ENCODE measurements at regions of chr1 and their contacts with region 1.

Region 1: GRCh38 chr1:100132566-100133477 is at the starts of genes SASS6 and TRMT13:
- DNase-seq: peak; percentile 88 to 97
- ATAC-seq: peak; percentile 96 to 99 (median 97)
- H3K4me3 ChIP-seq: peak within 1 kb of the TSS; percentile 85
- H3K4me3 Mint-ChIP-seq: peak within 1 kb of the TSS; percentile 97
- H3K27ac ChIP-seq: peak within 1 kb of the TSS; percentile 62
- H3K27ac Mint-ChIP-seq: peak within 1 kb of the TSS; percentile 92 to 93
- H3K4me1 ChIP-seq: peaks cover 10% of the 10 kb centered on the region
- H3K4me1 Mint-ChIP-seq: peaks cover 21 to 32% of the 10 kb centered on the region in 2 donors
- H3K27me3 ChIP-seq: no peaks in the 10 kb centered on the region
- H3K27me3 Mint-ChIP-seq: no peaks in the 10 kb centered on the region
- CTCF ChIP-seq: no peak
- total RNA-seq, gene SASS6: 5.3 to 6.2 (median 5.6) TPM
- total RNA-seq, gene TRMT13: 12.7 to 22.3 (median 13.4) TPM

Region 2: GRCh38 chr1:99849744-99850458 is 282.9 kb before region 1 on chr1 and contains the start of gene AGL:
- intact Hi-C with region 1: loop called (anchors 5 kb)
- DNase-seq: peak; percentile 83 to 92
- ATAC-seq: peak; percentile 94 to 96 (median 95)
- H3K4me3 ChIP-seq: peak within 1 kb of the TSS; percentile 59
- H3K4me3 Mint-ChIP-seq: peak within 1 kb of the TSS; percentile 97
- H3K27ac ChIP-seq: peak within 1 kb of the TSS; percentile 63
- H3K27ac Mint-ChIP-seq: peak within 1 kb of the TSS; percentile 86 to 91
- H3K4me1 ChIP-seq: peaks cover 11% of the 10 kb centered on the region
- H3K4me1 Mint-ChIP-seq: peaks cover 27 to 28% of the 10 kb centered on the region in 2 donors
- H3K27me3 ChIP-seq: no peaks in the 10 kb centered on the region
- H3K27me3 Mint-ChIP-seq: peaks cover 2 to 6% of the 10 kb centered on the region in 2 donors
- CTCF ChIP-seq: no peak
- total RNA-seq, gene AGL: 13.5 to 19.4 (median 15.3) TPM

Region 3: GRCh38 chr1:100037927-100038659 is 94.7 kb before region 1 on chr1:
- intact Hi-C with region 1: loop called (anchors 2 kb)
- DNase-seq: peak; percentile 90 to 95
- ATAC-seq: peak; percentile 87 to 97 (median 92)
- H3K4me3 ChIP-seq: peak overlapping the region; percentile 98
- H3K4me3 Mint-ChIP-seq: peak overlapping the region; percentile 99
- H3K27ac ChIP-seq: peak overlapping the region; percentile 99
- H3K27ac Mint-ChIP-seq: peak overlapping the region; percentile 99
- H3K4me1 ChIP-seq: peaks cover 8% of the 10 kb centered on the region
- H3K4me1 Mint-ChIP-seq: peaks cover 46 to 51% of the 10 kb centered on the region in 2 donors
- H3K27me3 ChIP-seq: no peaks in the 10 kb centered on the region
- H3K27me3 Mint-ChIP-seq: no peaks in the 10 kb centered on the region
- CTCF ChIP-seq: no peak

Region 4: DNA sequence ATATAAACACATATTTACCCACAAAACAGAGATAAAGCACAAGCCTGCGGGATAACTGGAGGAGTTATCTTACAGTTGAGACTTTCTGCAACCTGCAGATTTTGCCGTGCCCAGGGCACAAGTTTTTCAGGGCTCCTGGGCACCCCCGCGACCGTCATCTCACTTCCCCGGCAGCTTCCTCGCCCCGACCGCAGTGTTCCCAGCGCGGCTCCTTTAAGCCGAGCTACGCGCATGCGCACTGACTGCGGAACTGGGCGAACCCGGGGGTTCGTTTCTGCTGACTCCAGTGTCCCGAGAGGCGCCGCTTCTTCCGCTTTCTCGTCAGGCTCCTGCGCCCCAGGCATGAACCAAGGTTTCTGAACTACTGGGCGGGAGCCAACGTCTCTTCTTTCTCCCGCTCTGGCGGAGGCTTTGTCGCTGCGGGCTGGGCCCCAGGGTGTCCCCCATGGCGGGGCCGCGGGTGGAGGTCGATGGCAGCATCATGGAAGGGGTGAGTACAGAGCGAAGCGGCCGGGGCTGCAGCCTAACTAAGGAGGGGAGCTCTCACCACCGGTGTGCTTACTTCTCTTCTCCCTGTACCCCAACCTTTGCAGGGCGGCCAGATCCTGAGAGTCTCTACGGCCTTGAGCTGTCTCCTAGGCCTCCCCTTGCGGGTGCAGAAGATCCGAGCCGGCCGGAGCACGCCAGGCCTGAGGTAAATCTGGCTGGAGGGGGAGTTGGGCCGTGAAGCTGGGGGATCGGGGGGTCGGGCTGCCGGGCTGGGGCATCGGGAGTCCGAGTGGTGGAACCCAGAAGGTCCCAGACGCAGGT is 133.3 kb after region 1 on chr1 and contains the start of gene RTCA:
- intact Hi-C with region 1: loop called (anchors 2 kb)
- DNase-seq: peak; percentile 93 to 99
- ATAC-seq: peak; percentile 93 to 98 (median 94)
- H3K4me3 ChIP-seq: peak within 1 kb of the TSS; percentile 86
- H3K4me3 Mint-ChIP-seq: peak within 1 kb of the TSS; percentile 100
- H3K27ac ChIP-seq: peak within 1 kb of the TSS; percentile 77
- H3K27ac Mint-ChIP-seq: peak within 1 kb of the TSS; percentile 97 to 99
- H3K4me1 ChIP-seq: peaks cover 32% of the 10 kb centered on the region
- H3K4me1 Mint-ChIP-seq: peaks cover 46 to 47% of the 10 kb centered on the region in 2 donors
- H3K27me3 ChIP-seq: no peaks in the 10 kb centered on the region
- H3K27me3 Mint-ChIP-seq: no peaks in the 10 kb centered on the region
- CTCF ChIP-seq: no peak
- total RNA-seq, gene RTCA: 49.3 to 60.8 (median 52.3) TPM

Region 5: DNA sequence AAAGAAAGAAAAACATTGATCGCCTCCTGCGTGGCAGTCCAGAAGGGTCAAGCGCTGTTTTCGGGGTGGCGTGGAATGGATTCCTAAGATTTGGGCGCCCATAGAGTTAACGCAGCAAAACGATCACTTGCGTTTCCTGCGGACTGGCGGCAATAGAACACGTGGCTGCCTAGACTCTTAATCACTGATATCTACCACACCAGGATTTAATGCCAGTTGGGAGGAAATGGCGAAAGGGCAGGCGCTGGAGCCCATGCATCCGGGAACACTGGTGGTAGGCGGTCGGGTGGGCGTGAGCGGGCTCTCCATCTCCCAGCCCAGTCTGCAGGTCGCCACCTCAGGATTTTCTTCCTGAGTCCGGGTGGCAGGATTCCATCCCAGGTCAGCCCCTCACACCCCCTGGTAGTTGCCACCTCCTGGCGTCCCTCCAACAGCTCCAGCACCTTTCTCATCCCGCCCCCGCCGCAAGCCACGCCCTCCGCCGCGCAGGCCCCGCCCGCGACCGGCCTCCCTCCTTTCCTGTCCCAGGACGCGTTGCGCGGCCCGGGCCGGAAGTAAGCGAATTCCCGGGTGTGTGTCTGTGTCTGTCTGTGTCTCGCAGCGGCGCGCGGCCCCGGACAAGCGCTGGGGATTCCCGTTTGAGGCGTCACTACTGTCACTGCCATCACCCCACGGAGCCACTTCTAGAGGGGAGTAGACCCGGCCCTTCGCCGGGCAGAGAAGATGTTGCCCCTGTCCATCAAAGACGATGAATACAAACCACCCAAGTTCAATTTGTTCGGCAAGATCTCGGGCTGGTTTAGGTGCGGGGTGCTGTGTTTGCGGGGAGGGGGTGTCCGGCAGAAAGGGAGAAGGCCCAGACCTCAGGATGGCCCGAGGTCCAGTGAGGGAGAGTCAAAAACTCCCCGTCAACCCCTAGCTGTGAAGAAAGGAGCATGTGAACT is 763.0 kb after region 1 on chr1 and contains the start of gene SLC30A7:
- intact Hi-C with region 1: loop called (anchors 2 kb)
- DNase-seq: peak; percentile 95 to 97
- ATAC-seq: peak; percentile 81 to 94 (median 86)
- H3K4me3 ChIP-seq: peak within 1 kb of the TSS; percentile 97
- H3K4me3 Mint-ChIP-seq: peak within 1 kb of the TSS; percentile 99
- H3K27ac ChIP-seq: peak within 1 kb of the TSS; percentile 99
- H3K27ac Mint-ChIP-seq: peak within 1 kb of the TSS; percentile 100
- H3K4me1 ChIP-seq: peaks cover 8% of the 10 kb centered on the region
- H3K4me1 Mint-ChIP-seq: peaks cover 40 to 46% of the 10 kb centered on the region in 2 donors
- H3K27me3 ChIP-seq: no peaks in the 10 kb centered on the region
- H3K27me3 Mint-ChIP-seq: no peaks in the 10 kb centered on the region
- CTCF ChIP-seq: no peak
- total RNA-seq, gene SLC30A7: 27.7 to 38.8 (median 36.2) TPM

Measured in natural killer cell (primary cell).